Activated CD4-positive, alpha-beta T cell treated with anti-CD3 and anti-CD28 coated beads for 36 hours (primary cell): ENCODE measurements at regions of chr17 and their contacts with region 1.

Region 1: GRCh38 chr17:47941236-47941994 is at the start of gene PNPO:
- DNase-seq: peak; percentile 98
- ATAC-seq: peak; percentile 99
- H3K4me3 Mint-ChIP-seq: peak within 1 kb of the TSS; percentile 95
- H3K27ac Mint-ChIP-seq: peak within 1 kb of the TSS; percentile 91
- H3K4me1 Mint-ChIP-seq: peaks cover 64% of the 10 kb centered on the region
- H3K27me3 Mint-ChIP-seq: no peaks in the 10 kb centered on the region
- total RNA-seq, gene PNPO: 29.7 to 41.0 TPM

Region 2: DNA sequence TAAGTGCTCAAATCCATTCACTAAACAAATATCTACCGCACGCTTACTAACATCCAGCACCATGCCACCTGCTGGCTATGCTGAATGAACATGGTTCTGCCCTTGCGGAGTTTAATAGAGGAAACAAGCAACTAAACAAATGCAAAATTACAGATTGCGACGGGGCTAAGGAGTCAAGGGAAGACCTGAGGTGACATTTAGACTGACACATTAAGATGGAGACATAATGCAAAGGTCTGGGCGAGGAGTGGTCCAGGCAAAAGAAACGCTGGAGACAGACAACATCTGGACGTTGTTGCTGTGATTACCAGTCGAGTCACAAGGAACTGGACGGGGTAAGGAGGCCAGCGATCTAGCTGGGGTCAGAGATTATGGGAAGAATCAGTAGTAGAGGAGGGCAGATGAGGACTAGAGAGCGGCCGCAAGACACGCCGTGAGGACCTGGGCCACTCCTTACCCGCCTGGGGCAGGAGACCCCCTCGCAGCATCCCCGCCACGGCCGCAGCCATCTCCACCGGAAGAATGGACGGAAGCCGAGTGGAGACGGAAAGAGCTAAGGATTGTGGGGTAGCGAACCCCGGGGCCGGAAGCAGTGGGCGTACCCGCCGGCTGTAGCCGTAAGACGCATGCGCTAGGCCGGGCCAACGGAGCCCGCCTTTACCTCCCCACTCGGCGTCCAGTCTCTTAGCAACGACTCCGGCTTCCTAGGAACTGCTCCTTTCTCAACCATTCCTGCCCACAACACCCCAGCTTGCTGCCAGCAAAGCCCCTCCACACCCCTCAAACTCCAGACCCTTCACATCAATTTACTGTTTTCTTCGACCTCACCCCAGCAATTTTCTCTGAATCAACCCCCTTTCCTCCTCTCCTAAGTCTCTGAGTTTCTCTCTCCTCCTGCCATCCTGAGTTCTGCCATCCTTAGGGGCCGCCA is 110.1 kb before region 1 on chr17 and contains the starts of genes LRRC46 and MRPL10:
- CTCF ChIA-PET with region 1: interaction called, 8 read pairs
- POLR2A ChIA-PET with region 1: no interaction called
- intact Hi-C with region 1: loop called in 1 of 2 experiments (anchors 1 kb)
- DNase-seq: peak; percentile 96
- ATAC-seq: peak; percentile 94
- H3K4me3 Mint-ChIP-seq: peak within 1 kb of the TSS; percentile 88
- H3K27ac Mint-ChIP-seq: peak within 1 kb of the TSS; percentile 88
- H3K4me1 Mint-ChIP-seq: peaks cover 57% of the 10 kb centered on the region
- H3K27me3 Mint-ChIP-seq: no peaks in the 10 kb centered on the region
- total RNA-seq, gene LRRC46: 0.46 to 0.82 TPM
- total RNA-seq, gene MRPL10: 66.9 to 70.9 TPM

Region 3: GRCh38 chr17:47895856-47896671 is 45.4 kb before region 1 on chr17 and contains the start of gene SP2:
- CTCF ChIA-PET with region 1: interaction called, 6 read pairs
- POLR2A ChIA-PET with region 1: interaction called, 13 read pairs
- intact Hi-C with region 1: loop called (anchors 1 kb)
- DNase-seq: peak; percentile 99
- ATAC-seq: peak; percentile 94
- H3K4me3 Mint-ChIP-seq: peak within 1 kb of the TSS; percentile 96
- H3K27ac Mint-ChIP-seq: peak within 1 kb of the TSS; percentile 96
- H3K4me1 Mint-ChIP-seq: peaks cover 46% of the 10 kb centered on the region
- H3K27me3 Mint-ChIP-seq: no peaks in the 10 kb centered on the region
- total RNA-seq, gene SP2: 15.7 to 19.8 TPM

Region 4: DNA sequence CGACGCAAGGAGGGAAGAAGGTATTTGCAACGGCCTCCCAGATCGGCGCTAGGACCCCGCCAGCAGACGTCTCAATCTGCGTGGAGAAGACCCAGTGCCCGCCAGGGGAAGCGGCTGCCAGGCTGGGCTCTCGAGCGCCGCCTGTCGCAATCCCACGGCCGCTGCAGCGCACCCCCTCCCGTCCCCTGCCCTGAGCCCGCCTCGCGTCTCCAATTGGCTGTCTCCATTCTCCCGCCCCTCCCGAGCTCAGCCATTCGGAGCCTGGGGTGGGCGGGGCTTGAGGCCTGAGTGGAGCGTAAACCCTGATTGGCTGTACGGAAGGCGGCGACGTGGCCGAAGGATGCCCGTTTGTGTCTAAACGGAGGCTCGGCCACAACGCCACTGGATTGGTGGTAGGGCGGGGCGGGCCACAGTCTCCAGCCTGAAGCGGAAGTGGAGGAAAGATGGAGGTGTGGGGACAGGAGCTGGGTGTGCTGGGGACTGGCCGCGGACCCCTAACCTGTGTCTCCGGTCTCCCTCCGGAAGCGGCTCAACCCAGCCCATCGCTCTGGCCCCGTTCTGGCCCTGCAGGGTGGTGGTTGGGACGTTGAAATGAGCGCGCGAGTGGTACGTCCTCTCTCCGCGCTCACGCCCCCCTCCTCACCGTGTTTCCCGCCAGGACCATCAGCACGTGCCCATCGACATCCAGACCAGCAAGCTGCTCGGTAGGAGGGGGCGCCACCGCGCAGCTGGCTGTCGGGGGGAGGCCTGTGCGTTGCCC is 29.5 kb after region 1 on chr17 and contains the start of gene CDK5RAP3:
- CTCF ChIA-PET with region 1: interaction called, 222 read pairs
- POLR2A ChIA-PET with region 1: interaction called, 15 read pairs
- intact Hi-C with region 1: loop called (anchors 1 kb)
- DNase-seq: peak; percentile 100
- ATAC-seq: peak; percentile 100
- H3K4me3 Mint-ChIP-seq: peak within 1 kb of the TSS; percentile 97
- H3K27ac Mint-ChIP-seq: peak within 1 kb of the TSS; percentile 94
- H3K4me1 Mint-ChIP-seq: peaks cover 21% of the 10 kb centered on the region
- H3K27me3 Mint-ChIP-seq: no peaks in the 10 kb centered on the region
- total RNA-seq, gene CDK5RAP3: 147 to 156 TPM

Region 5: GRCh38 chr17:47987240-47987835 is 45.9 kb after region 1 on chr17:
- CTCF ChIA-PET with region 1: no interaction called
- POLR2A ChIA-PET with region 1: no interaction called
- intact Hi-C with region 1: no loop called
- DNase-seq: no peak
- ATAC-seq: no peak
- H3K4me3 Mint-ChIP-seq: no peak overlapping the region
- H3K27ac Mint-ChIP-seq: no peak overlapping the region
- H3K4me1 Mint-ChIP-seq: no peaks in the 10 kb centered on the region
- H3K27me3 Mint-ChIP-seq: no peaks in the 10 kb centered on the region

Region 6: GRCh38 chr17:48074315-48075081 is 133.1 kb after region 1 on chr17:
- CTCF ChIA-PET with region 1: no interaction called
- POLR2A ChIA-PET with region 1: no interaction called
- intact Hi-C with region 1: no loop called
- DNase-seq: peak; percentile 86
- ATAC-seq: peak; percentile 75
- H3K4me3 Mint-ChIP-seq: no peak overlapping the region
- H3K27ac Mint-ChIP-seq: no peak overlapping the region
- H3K4me1 Mint-ChIP-seq: no peaks in the 10 kb centered on the region
- H3K27me3 Mint-ChIP-seq: no peaks in the 10 kb centered on the region

Region 7: DNA sequence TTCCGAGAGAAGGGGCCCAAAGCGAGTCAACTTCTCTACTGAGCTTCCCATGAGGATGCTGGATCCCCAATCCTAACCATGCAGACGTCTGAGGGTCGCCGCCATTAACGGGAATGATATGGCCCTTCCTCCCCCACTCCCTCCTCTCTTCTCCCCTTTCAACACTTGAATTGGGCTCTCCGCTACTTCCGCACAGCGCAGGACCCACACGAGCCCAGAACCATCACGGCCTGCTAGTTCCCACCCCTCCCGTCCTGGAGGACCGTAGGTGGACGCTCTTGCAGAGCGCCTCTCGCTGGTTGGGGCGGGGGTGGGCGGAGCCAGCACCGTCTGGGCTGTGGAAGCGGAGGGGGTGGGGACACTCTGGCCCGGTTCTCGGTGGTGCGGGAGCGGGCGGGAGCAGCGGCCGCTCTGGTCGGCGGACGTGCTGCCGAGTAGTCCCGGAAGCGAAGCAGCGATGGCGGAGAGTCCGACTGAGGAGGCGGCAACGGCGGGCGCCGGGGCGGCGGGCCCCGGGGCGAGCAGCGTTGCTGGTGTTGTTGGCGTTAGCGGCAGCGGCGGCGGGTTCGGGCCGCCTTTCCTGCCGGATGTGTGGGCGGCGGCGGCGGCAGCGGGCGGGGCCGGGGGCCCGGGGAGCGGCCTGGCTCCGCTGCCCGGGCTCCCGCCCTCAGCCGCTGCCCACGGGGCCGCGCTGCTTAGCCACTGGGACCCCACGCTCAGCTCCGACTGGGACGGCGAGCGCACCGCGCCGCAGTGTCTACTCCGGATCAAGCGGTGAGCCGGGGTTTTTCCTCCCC is 966.8 kb after region 1 on chr17 and contains the start of gene UBE2Z:
- CTCF ChIA-PET with region 1: interaction called, 3 read pairs
- POLR2A ChIA-PET with region 1: no interaction called
- intact Hi-C with region 1: loop called in 1 of 2 experiments (anchors 10 kb)
- DNase-seq: peak; percentile 94
- ATAC-seq: peak; percentile 86
- H3K4me3 Mint-ChIP-seq: peak within 1 kb of the TSS; percentile 89
- H3K27ac Mint-ChIP-seq: peak within 1 kb of the TSS; percentile 97
- H3K4me1 Mint-ChIP-seq: peaks cover 46% of the 10 kb centered on the region
- H3K27me3 Mint-ChIP-seq: no peaks in the 10 kb centered on the region
- total RNA-seq, gene UBE2Z: 104 TPM